ENCODE measurements at regions of chr22 and their contacts with region 1.

Region 1: GRCh38 chr22:23767673-23768548 is at the start of gene CHCHD10:
- DNase-seq: peak; percentile 80 to 90 (median 84)
- H3K4me3 ChIP-seq: peak within 1 kb of the TSS; percentile 52
- H3K27ac ChIP-seq: no peak within 1 kb of the TSS
- H3K4me1 ChIP-seq: peaks cover 10% of the 10 kb centered on the region
- H3K27me3 ChIP-seq: no peaks in the 10 kb centered on the region
- CTCF ChIP-seq: peak; percentile 46 to 84 (median 82)
- EP300 ChIP-seq: no peak
- POLR2A ChIP-seq: no peak
- total RNA-seq, gene CHCHD10: 2.7 to 40.5 (median 22.9) TPM

Region 2: GRCh38 chr22:23713696-23714572 is 54.0 kb before region 1 on chr22:
- intact Hi-C with region 1: loop called in 1 of 4 experiments (anchors 5 kb)
- DNase-seq: no peak
- H3K4me3 ChIP-seq: no peak overlapping the region
- H3K27ac ChIP-seq: no peak overlapping the region
- H3K4me1 ChIP-seq: peaks cover 5% of the 10 kb centered on the region
- H3K27me3 ChIP-seq: no peaks in the 10 kb centered on the region
- CTCF ChIP-seq: no peak
- EP300 ChIP-seq: no peak
- POLR2A ChIP-seq: no peak

Region 3: GRCh38 chr22:23720855-23721254 is 47.1 kb before region 1 on chr22:
- intact Hi-C with region 1: loop called in 1 of 4 experiments (anchors 2 kb)
- DNase-seq: no peak
- H3K4me3 ChIP-seq: no peak overlapping the region
- H3K27ac ChIP-seq: no peak overlapping the region
- H3K4me1 ChIP-seq: peaks cover 4% of the 10 kb centered on the region
- H3K27me3 ChIP-seq: no peaks in the 10 kb centered on the region
- CTCF ChIP-seq: no peak
- EP300 ChIP-seq: no peak
- POLR2A ChIP-seq: no peak

Region 4: GRCh38 chr22:23849009-23850006 is 81.4 kb after region 1 on chr22:
- intact Hi-C with region 1: loop called (anchors 5 kb)
- DNase-seq: peak; percentile 74 to 92 (median 85)
- H3K4me3 ChIP-seq: no peak overlapping the region
- H3K27ac ChIP-seq: no peak overlapping the region
- H3K4me1 ChIP-seq: peaks cover 5% of the 10 kb centered on the region
- H3K27me3 ChIP-seq: no peaks in the 10 kb centered on the region
- CTCF ChIP-seq: peak; percentile 90 to 99 (median 97)
- EP300 ChIP-seq: no peak
- POLR2A ChIP-seq: no peak